Posterior cingulate gyrus (tissue), 11 donors: ENCODE measurements at regions of chr18 and their contacts with region 1.

Region 1: DNA sequence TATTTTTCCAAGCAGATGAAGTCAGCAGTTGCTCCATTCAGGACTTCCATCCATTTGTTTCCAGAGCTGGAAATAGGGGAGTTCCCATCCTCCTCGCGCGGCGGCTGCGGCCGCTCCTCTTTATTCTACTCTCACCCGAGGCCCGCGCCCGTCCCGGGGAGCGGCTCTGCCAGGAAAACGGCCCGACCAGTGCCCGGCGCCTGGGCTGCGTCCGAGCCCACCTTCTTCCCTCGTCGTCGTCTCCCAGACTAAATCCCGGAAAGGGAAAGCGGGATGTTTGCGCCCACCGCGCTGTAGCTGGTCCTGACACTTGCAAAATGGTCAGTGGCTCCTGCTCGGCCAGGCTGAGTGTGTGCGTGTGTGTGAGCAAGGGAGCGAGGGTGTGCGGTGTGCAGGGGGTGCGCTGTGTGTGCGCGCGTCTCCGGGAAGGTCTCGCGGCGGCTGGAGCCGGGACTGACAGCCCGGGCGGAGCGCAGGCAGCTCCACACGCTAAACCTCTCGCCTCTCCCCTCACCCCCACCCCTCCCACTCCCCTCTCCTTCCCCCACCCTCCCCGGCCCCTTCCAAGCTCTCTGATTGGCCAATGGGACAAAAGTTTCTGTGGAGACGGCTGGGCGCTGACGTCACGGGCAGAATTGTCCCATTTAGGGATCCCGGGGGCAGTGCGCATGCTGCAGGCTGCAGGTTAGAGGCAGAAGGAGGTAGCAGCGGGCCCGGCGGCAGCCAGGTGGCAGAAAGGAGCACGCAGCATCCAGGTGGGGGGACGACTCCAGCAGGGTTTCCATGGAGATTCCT is at the start of gene NOL4:
- DNase-seq: peak; percentile 59 to 98 (median 88)

Region 2: GRCh38 chr18:34158881-34159690 is 65.5 kb before region 1 on chr18:
- intact Hi-C with region 1: loop called (anchors 5 kb)
- DNase-seq: peak; percentile 45 to 94 (median 68)